ENCODE measurements at regions of chr1 and their contacts with region 1.

Region 1: DNA sequence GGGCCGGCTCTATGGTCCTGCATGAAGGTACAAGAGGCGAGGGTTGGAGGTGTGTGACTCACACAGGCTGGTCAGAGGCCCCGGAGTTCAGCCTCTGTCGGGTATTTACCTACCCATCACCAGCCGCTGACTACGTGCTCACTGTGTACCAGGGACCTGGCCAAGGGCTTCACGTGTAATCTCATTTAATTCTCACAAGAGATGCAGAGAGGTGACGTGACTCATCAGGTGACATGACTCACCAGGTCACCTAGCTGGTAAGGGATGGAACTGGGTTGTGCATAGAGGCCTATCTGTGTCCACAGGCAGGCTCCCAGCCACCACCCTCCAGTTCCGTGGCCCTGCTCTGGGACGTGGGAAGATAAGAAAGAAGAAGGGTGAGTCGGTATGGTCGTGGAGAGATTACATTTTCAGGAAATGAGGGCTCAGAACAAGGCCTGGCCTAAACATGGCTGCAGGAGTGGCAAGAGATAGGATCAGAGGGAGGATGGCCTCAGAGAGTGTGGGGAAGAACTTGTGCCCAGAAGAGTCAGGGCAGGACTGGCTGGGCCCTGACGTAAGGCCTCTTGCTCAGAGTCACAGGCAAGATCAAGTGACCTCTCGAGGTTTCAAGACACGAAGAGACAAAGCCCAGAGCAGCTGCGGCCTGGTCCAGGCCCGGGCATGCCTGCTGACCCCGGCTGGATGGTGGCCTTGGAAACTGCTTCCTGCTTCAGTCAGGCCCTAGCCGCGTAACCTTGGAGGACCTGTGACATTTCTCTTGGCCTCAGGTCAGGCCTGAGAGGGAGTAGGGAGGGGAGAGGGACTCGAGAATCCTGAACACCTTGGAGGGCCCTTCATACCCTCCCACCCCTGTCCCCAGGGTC is 52.7 kb upstream of the WASF2 start:
- DNase-seq: no peak
- H3K4me3 ChIP-seq: no peak overlapping the region
- H3K4me3 Mint-ChIP-seq: no peak overlapping the region
- H3K27ac ChIP-seq: no peak overlapping the region
- H3K27ac Mint-ChIP-seq: peak overlapping the region in 2 of 7 donors; percentile 6 to 28
- H3K4me1 ChIP-seq: no peaks in the 10 kb centered on the region
- H3K4me1 Mint-ChIP-seq: peaks cover 3% of the 10 kb centered on the region
- H3K27me3 ChIP-seq: no peaks in the 10 kb centered on the region
- H3K27me3 Mint-ChIP-seq: peaks cover 2% of the 10 kb centered on the region in 3 donors
- CTCF ChIP-seq: no peak

Region 2: DNA sequence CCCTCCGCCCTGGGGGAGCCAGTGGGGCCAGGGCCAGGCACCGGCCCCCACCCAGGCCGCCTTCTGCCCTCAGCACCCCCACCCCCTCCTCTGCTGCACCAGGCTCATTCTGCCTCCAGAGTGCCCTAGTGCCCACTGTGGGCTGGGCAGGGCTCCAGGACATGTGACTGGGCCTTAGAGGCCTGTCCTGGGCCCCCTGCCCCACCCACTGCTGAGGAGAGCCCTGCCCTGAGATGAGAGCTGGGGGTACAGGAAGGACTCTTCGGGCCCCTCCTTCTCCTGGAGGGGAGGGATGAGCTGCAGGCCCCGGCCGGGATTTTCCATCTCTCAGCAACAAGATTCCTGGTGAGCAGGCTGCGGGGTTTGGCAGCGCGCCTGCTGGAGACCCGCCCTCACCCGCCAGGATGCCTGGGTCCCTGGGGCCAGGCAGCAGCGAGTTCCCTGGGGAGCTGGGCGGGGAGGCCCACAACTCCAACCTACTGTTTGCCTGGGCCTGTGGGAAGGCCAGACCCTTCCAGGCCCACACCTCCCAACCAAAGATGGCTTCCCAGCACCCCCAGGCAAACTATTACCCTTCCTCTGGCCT is 47.3 kb after region 1 on chr1:
- intact Hi-C with region 1: no loop called
- DNase-seq: no peak
- H3K4me3 ChIP-seq: no peak overlapping the region
- H3K4me3 Mint-ChIP-seq: no peak overlapping the region
- H3K27ac ChIP-seq: no peak overlapping the region
- H3K27ac Mint-ChIP-seq: no peak overlapping the region
- H3K4me1 ChIP-seq: peaks cover 0 to 6% of the 10 kb centered on the region in 2 donors
- H3K4me1 Mint-ChIP-seq: peaks cover 2% of the 10 kb centered on the region
- H3K27me3 ChIP-seq: no peaks in the 10 kb centered on the region
- H3K27me3 Mint-ChIP-seq: no peaks in the 10 kb centered on the region
- CTCF ChIP-seq: no peak

Region 3: GRCh38 chr1:27689423-27690173 is 147.0 kb after region 1 on chr1:
- intact Hi-C with region 1: loop called in 1 of 2 experiments (anchors 10 kb)
- DNase-seq: no peak
- H3K4me3 ChIP-seq: no peak overlapping the region
- H3K4me3 Mint-ChIP-seq: no peak overlapping the region
- H3K27ac ChIP-seq: no peak overlapping the region
- H3K27ac Mint-ChIP-seq: no peak overlapping the region
- H3K4me1 ChIP-seq: no peaks in the 10 kb centered on the region
- H3K4me1 Mint-ChIP-seq: peaks cover 3% of the 10 kb centered on the region
- H3K27me3 ChIP-seq: no peaks in the 10 kb centered on the region
- H3K27me3 Mint-ChIP-seq: peaks cover 2 to 6% (median 3%) of the 10 kb centered on the region in 3 donors
- CTCF ChIP-seq: no peak

Measured in CD14-positive monocyte (primary cell).